Activated naive CD4-positive, alpha-beta T cell treated with anti-CD3 and anti-CD28 coated beads for 36 hours (primary cell): ENCODE measurements at regions of chr16 and their contacts with region 1.

Region 1: GRCh38 chr16:89241187-89242007 is 23.9 kb downstream of the ZNF778 start:
- DNase-seq: peak; percentile 77
- H3K4me3 Mint-ChIP-seq: peak overlapping the region; percentile 95
- H3K27ac Mint-ChIP-seq: peak overlapping the region; percentile 95
- H3K4me1 Mint-ChIP-seq: peaks cover 16% of the 10 kb centered on the region
- H3K27me3 Mint-ChIP-seq: no peaks in the 10 kb centered on the region

Region 2: GRCh38 chr16:89093602-89094251 is 147.7 kb before region 1 on chr16 and contains the start of gene ACSF3:
- CTCF ChIA-PET with region 1: no interaction called
- intact Hi-C with region 1: loop called (anchors 10 kb)
- DNase-seq: peak; percentile 63
- H3K4me3 Mint-ChIP-seq: peak within 1 kb of the TSS; percentile 92
- H3K27ac Mint-ChIP-seq: peak within 1 kb of the TSS; percentile 92
- H3K4me1 Mint-ChIP-seq: peaks cover 47% of the 10 kb centered on the region
- H3K27me3 Mint-ChIP-seq: no peaks in the 10 kb centered on the region
- total RNA-seq, gene ACSF3: 26.1 to 26.7 TPM

Region 3: DNA sequence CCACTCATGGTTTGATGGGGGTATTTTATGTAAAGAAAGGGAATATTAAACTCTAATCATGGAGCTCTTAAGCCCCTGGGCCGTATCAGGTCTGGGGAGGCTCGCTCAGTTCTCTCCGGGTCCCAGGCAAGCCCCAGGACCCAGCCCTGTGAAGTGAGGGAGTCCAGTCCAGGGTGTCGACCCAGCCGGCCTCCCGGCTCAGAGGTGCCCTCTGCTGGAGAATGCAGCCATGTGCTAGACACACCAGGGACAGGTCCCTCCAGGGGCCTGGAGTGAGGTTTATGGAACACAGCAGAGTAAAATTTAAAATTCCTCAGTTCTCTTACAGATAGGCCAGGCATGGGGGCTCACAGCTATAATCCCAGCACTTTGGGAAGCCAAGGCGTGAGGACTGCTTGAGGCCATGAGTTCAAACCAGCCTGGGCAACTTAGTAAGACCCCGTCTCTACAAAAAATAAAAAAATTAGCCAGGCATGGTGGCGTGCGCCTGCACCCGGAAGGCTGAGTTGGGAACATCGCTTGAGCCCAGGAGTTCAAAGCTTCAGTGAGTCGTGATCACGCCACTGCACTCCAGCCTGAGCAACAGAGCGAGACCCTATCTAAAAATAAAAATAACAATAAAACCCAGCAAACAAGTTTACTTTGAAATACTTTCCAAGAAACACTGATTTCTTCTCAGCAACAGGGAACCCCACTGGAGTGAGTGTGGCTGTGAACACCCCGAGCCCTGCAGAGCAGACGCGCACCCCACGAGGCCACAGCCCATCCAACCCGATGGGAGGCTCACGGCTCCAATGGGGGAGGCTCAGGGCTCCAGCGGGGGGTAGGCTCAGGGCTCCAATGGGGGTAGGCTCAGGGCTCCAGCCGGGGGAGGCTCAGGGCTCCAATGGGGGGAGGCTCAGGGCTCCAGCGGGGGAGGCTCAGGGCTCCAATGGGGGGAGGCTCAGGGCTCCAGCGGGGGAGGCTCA is 48.3 kb after region 1 on chr16:
- CTCF ChIA-PET with region 1: interaction called, 5 read pairs
- intact Hi-C with region 1: loop called (anchors 5 kb)
- DNase-seq: peak; percentile 80
- H3K4me3 Mint-ChIP-seq: no peak overlapping the region
- H3K27ac Mint-ChIP-seq: peak overlapping the region; percentile 53
- H3K4me1 Mint-ChIP-seq: peaks cover 13% of the 10 kb centered on the region
- H3K27me3 Mint-ChIP-seq: no peaks in the 10 kb centered on the region

Region 4: DNA sequence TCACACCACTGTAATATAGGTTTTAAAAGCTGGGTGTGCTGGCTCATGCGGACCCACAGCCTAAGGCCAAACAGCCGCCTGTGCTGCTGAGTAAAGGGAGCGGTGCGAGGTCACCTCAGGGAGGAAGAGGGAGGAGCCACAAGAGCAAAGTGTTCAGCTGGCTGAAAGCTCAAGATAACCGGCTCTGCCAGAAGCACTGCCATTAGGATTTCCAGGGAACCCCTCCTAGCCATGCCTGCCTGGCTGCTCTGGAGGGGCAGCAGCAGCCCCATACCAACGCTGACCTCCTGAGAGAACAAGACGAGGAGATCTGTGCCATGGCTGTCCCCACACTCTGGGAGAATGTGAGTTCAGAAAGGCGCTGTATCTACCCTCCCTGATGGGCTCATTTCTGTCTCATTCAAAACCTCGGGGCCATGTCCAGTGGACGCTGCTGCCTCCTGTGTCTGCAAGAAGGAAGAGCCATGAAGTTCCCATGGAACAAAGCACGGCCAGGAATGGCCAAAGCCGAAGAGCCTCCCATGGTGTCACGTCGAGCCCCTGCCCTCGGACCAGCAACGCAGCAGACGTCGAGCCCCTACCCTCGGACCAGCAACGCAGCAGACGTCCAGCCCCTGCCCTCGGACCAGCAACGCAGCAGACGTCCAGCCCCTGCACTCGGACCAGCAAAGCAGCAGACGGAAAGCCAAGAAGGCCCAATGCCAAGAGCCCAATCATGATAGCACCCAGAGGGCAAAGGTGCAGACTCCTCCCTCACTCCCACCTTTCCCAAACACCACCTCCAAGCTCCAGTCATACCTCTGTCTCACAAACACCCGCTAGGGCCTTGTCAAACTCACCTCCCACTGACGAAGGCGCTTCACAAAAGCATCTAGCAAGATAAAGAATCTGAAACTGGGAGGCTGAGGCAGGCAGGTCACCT is 141.9 kb after region 1 on chr16:
- CTCF ChIA-PET with region 1: no interaction called
- intact Hi-C with region 1: no loop called
- DNase-seq: peak; percentile 42
- H3K4me3 Mint-ChIP-seq: peak overlapping the region; percentile 32
- H3K27ac Mint-ChIP-seq: peak overlapping the region; percentile 71
- H3K4me1 Mint-ChIP-seq: peaks cover 93% of the 10 kb centered on the region
- H3K27me3 Mint-ChIP-seq: no peaks in the 10 kb centered on the region

Region 5: DNA sequence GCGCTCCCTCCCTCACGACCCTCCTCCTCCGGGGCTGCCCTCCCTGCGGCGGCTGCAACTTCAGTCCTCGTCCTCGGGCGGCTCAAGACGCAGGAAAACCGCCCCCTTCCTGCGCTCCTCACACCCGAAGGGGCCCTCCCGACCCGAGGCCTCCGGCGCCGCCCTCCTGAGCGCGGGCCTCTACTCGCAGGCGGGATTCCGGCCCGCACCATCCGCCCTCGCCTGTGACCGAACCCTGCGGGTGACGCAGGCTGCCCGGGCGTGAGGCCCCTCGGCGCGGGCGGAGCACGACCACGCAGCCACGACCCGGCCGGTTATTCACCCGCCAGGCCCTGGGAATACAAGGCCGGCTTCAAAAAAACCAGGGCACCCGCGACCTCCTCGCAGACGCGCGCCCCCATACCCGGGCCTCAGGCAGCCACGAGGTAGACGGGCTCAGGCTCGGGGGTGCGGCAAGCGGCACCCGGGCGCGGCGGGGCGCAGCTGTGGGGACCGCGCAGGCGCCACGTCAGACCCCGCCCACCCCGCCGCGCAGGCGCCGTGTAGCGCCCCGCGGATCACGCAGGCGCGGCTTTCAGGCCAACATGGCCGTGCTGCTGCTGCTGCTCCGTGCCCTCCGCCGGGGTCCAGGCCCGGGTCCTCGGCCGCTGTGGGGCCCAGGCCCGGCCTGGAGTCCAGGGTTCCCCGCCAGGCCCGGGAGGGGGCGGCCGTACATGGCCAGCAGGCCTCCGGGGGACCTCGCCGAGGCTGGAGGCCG is 266.6 kb after region 1 on chr16 and contains the start of gene SPG7:
- CTCF ChIA-PET with region 1: interaction called, 4 read pairs
- intact Hi-C with region 1: loop called (anchors 1 kb)
- DNase-seq: peak; percentile 86
- H3K4me3 Mint-ChIP-seq: peak within 1 kb of the TSS; percentile 88
- H3K27ac Mint-ChIP-seq: peak within 1 kb of the TSS; percentile 89
- H3K4me1 Mint-ChIP-seq: peaks cover 31% of the 10 kb centered on the region
- H3K27me3 Mint-ChIP-seq: no peaks in the 10 kb centered on the region
- total RNA-seq, gene SPG7: 62.4 to 67.7 TPM

Region 6: DNA sequence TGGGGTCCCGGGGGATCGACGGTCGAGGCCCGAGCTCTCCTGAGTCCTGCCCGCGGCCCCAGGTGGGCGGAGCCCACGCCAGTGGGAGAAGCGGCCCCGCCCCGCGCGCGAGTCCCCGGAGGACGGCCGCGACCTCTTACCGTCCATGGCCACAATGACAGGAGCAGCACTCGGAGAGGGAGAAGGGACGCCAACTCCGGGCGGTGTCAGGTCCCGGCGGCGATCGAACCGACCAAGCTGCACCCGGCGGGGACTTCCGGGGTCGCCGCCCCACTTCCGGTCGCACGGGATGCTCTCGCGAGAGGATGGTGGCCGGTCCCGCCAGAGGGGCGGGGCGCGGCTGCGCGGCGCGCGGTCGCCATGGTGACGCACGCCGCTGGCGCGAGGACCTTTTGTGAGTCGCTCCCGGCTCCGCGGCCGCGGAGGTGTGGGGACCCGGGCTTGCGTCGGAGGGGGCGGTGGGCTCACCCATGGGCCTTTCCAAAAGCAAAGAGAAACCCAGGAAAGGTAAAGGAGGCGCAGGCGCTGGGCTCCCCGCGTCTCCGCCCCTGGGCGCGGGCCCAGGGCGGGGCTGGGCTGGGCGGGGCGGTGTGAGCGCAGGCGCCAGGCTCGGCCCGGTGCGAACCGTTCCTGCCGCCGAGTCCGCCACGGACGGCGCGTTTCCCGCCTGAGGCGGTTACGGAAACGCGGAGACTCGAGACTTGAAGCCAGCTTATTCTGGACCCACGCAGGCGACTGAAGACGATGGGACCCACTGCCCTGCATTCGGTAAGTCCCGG is 416.2 kb after region 1 on chr16 and contains the starts of genes CHMP1A and SPATA33:
- CTCF ChIA-PET with region 1: no interaction called
- intact Hi-C with region 1: loop called (anchors 10 kb)
- DNase-seq: peak; percentile 92
- H3K4me3 Mint-ChIP-seq: peak within 1 kb of the TSS; percentile 91
- H3K27ac Mint-ChIP-seq: peak within 1 kb of the TSS; percentile 77
- H3K4me1 Mint-ChIP-seq: peaks cover 32% of the 10 kb centered on the region
- H3K27me3 Mint-ChIP-seq: no peaks in the 10 kb centered on the region
- total RNA-seq, gene CHMP1A: 46.8 to 48.4 TPM
- total RNA-seq, gene SPATA33: 6.5 to 7.0 TPM